ENCODE measurements at regions of chr12 and their contacts with region 1.

Region 1: DNA sequence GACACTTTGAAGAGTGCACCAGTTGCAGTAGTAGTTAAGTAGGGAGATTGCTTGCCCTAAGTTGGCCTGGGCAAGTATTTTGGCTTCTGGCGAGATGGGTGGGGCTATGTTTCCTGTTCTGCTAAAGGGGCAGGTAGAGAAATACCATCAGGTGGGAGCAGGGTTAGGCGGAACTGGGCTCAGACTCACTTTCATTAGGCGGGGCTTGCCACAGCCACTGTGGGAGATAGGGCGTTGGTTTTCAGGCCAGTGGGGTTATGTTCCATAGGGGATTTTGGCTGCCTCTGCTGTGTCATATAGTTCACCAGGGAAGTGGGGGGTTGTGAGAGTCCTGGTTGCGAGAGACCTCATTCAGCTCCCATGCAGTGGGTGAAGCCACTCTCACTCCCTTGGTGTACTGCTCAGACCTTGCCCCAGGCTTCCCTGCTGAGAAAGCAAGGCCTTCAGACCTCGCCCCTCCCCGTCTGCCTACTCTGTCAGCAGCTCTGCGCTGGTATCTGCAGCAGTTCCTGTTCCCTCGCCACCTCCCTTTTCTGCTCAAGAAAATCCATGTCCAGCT is 43.3 kb downstream of the AEBP2 start:
- DNase-seq: peak; percentile 26
- H3K4me3 Mint-ChIP-seq: peak overlapping the region; percentile 8
- H3K27ac Mint-ChIP-seq: peak overlapping the region; percentile 81
- H3K4me1 Mint-ChIP-seq: peaks cover 55% of the 10 kb centered on the region
- H3K27me3 Mint-ChIP-seq: no peaks in the 10 kb centered on the region

Region 2: DNA sequence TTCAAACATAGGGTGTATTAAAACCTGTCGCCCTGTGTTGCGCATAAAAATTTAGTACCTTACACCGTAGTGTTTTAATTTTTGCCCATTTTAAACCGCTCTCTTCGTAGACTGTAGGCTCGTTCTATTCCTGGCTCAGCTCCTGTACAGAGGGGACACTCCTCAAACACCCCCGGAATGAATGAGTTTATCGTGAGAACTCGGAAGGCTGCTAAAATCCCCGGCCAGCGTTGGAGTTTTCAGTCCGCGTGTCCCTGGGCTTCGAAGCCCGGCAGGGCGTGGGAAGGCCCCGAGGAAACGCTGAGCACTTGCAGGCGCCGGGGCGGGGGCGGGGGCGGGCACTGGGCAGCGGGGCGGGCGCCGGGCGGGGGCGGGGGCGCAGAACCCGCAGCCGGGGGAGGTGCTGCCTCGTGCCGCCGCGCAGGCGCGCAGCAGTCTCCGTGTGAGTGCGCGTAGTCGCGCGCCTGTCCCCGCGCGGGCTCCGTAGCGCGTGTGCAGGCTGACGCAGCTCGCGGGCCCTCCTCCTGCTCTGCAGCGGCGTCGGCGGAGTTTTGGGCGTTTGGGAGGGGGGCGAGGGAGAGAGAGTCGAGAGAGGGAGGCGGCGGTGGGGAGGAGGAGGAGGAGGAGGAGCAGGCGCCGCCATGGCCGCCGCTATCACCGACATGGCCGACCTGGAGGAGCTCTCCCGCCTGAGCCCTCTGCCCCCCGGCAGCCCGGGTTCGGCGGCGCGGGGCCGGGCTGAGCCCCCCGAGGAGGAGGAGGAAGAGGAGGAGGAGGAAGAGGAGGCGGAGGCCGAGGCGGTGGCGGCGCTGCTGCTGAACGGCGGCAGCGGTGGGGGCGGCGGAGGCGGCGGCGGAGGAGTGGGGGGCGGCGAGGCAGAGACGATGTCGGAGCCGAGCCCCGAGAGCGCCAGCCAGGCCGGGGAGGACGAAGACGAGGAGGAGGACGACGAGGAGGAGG is 43.3 kb before region 1 on chr12 and contains the start of gene AEBP2:
- intact Hi-C with region 1: loop called (anchors 1 kb)
- DNase-seq: peak; percentile 90
- H3K4me3 Mint-ChIP-seq: peak within 1 kb of the TSS; percentile 98
- H3K27ac Mint-ChIP-seq: peak within 1 kb of the TSS; percentile 99
- H3K4me1 Mint-ChIP-seq: peaks cover 57% of the 10 kb centered on the region
- H3K27me3 Mint-ChIP-seq: peaks cover 2% of the 10 kb centered on the region
- total RNA-seq, gene AEBP2: 53.9 and 58.1 TPM in 2 replicates

Region 3: GRCh38 chr12:19498099-19498498 is 15.5 kb after region 1 on chr12:
- intact Hi-C with region 1: loop called (anchors 2 kb)
- DNase-seq: no peak
- H3K4me3 Mint-ChIP-seq: no peak overlapping the region
- H3K27ac Mint-ChIP-seq: no peak overlapping the region
- H3K4me1 Mint-ChIP-seq: peaks cover 14% of the 10 kb centered on the region
- H3K27me3 Mint-ChIP-seq: no peaks in the 10 kb centered on the region

Region 4: GRCh38 chr12:19553175-19553574 is 70.5 kb after region 1 on chr12:
- intact Hi-C with region 1: loop called (anchors 2 kb)
- DNase-seq: no peak
- H3K4me3 Mint-ChIP-seq: no peak overlapping the region
- H3K27ac Mint-ChIP-seq: no peak overlapping the region
- H3K4me1 Mint-ChIP-seq: peaks cover 16% of the 10 kb centered on the region
- H3K27me3 Mint-ChIP-seq: no peaks in the 10 kb centered on the region

Region 5: GRCh38 chr12:19572920-19573558 is 90.4 kb after region 1 on chr12:
- intact Hi-C with region 1: no loop called
- DNase-seq: no peak
- H3K4me3 Mint-ChIP-seq: no peak overlapping the region
- H3K27ac Mint-ChIP-seq: no peak overlapping the region
- H3K4me1 Mint-ChIP-seq: peaks cover 6% of the 10 kb centered on the region
- H3K27me3 Mint-ChIP-seq: peaks cover 2% of the 10 kb centered on the region

Region 6: GRCh38 chr12:19675361-19675760 is 192.7 kb after region 1 on chr12:
- intact Hi-C with region 1: loop called (anchors 1 kb)
- DNase-seq: no peak
- H3K4me3 Mint-ChIP-seq: no peak overlapping the region
- H3K27ac Mint-ChIP-seq: peak overlapping the region; percentile 45
- H3K4me1 Mint-ChIP-seq: peaks cover 41% of the 10 kb centered on the region
- H3K27me3 Mint-ChIP-seq: peaks cover 8% of the 10 kb centered on the region

Measured in activated T-helper 1 cell treated with anti-CD3 and anti-CD28 coated beads, Interleukin-12 subunit alpha, Interleukin-12 subunit beta, Interleukin-2, Interleukin-4 antibody, amounts not matched to agents 30 ng/mL and 10 ng/mL and 1 ng/mL, durations not matched to agents 14 hours and 24 hours and 36 hours (primary cell).